Prostate gland (tissue), 2 donors: ENCODE measurements at regions of chr12 and their contacts with region 1.

Region 1: DNA sequence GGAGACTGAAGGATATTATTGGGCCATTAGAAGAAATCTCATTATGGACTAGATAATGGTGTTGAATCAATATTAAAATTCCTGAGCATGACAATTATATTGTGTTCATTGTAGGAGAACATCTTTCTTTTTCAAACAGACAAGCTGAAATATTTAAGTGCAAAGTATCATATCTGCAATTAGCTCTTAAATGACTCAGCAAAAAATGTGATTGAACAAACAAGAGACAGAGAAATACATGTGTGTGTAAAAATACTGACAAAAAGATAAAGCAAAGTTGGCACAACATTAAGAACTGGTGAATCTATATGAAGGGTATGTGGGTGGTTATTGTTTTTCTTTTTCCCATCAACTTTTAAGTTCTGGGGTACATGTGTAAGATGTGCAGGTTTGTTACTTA is 9.5 kb downstream of the CEP290 start:
- DNase-seq: no peak
- H3K4me3 ChIP-seq: no peak overlapping the region
- H3K27ac ChIP-seq: no peak overlapping the region
- H3K4me1 ChIP-seq: no peaks in the 10 kb centered on the region
- H3K27me3 ChIP-seq: no peaks in the 10 kb centered on the region
- CTCF ChIP-seq: no peak
- POLR2A ChIP-seq: no peak

Region 2: GRCh38 chr12:87995581-87996178 is 136.7 kb before region 1 on chr12:
- intact Hi-C with region 1: no loop called
- DNase-seq: peak; percentile 33
- H3K4me3 ChIP-seq: no peak overlapping the region
- H3K27ac ChIP-seq: no peak overlapping the region
- H3K4me1 ChIP-seq: no peaks in the 10 kb centered on the region
- H3K27me3 ChIP-seq: no peaks in the 10 kb centered on the region
- CTCF ChIP-seq: peak in 3 of 4 experiments; percentile 44 to 56 (median 52)
- POLR2A ChIP-seq: no peak

Region 3: GRCh38 chr12:88026196-88026595 is 106.2 kb before region 1 on chr12:
- intact Hi-C with region 1: no loop called
- DNase-seq: no peak
- H3K4me3 ChIP-seq: no peak overlapping the region
- H3K27ac ChIP-seq: no peak overlapping the region
- H3K4me1 ChIP-seq: no peaks in the 10 kb centered on the region
- H3K27me3 ChIP-seq: no peaks in the 10 kb centered on the region
- CTCF ChIP-seq: no peak
- POLR2A ChIP-seq: no peak

Region 4: DNA sequence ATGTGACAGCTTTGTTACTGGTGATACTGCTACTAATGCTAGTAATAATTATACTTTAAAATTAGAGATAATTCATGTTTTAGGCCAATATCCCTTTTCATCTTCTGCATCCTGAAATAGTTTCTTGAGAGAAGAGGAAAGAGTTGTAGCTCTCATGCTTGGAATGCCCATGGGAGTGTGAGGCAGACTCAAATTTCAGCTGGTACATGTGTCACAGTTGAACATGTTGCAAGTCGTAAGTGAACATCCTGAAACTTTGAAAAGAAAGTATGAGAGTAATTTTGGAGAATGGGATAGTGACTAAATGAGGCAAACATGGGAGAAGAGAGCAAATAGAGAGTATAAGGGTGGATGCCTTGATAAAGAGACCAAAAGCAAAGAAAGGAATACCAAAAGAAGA is 177.7 kb after region 1 on chr12:
- intact Hi-C with region 1: no loop called
- DNase-seq: no peak
- H3K4me3 ChIP-seq: no peak overlapping the region
- H3K27ac ChIP-seq: no peak overlapping the region
- H3K4me1 ChIP-seq: no peaks in the 10 kb centered on the region
- H3K27me3 ChIP-seq: no peaks in the 10 kb centered on the region
- CTCF ChIP-seq: no peak
- POLR2A ChIP-seq: no peak

Region 5: GRCh38 chr12:89384050-89384758 is 1251.8 kb after region 1 on chr12:
- intact Hi-C with region 1: loop called (anchors 5 kb)
- DNase-seq: peak; percentile 60
- H3K4me3 ChIP-seq: no peak overlapping the region
- H3K27ac ChIP-seq: peak overlapping the region; percentile 30 to 44
- H3K4me1 ChIP-seq: peaks cover 5% of the 10 kb centered on the region
- H3K27me3 ChIP-seq: no peaks in the 10 kb centered on the region
- CTCF ChIP-seq: no peak
- POLR2A ChIP-seq: no peak